PC-3 (cell line): ENCODE measurements at regions of chrX and their contacts with region 1.

Region 1: GRCh38 chrX:11533211-11533651 is 132.5 kb downstream of the ARHGAP6 start:
- DNase-seq: peak; percentile 84
- ATAC-seq: peak; percentile 86
- H3K4me3 ChIP-seq: no peak overlapping the region
- H3K27ac ChIP-seq: no peak overlapping the region
- H3K4me1 ChIP-seq: peaks cover 12% of the 10 kb centered on the region
- H3K27me3 ChIP-seq: no peaks in the 10 kb centered on the region
- CTCF ChIP-seq: peak; percentile 95

Region 2: GRCh38 chrX:11329021-11329420 is 204.2 kb before region 1 on chrX:
- CTCF ChIA-PET with region 1: no interaction called
- POLR2A ChIA-PET with region 1: no interaction called
- intact Hi-C with region 1: no loop called
- DNase-seq: peak; percentile 70
- ATAC-seq: peak; percentile 79
- H3K4me3 ChIP-seq: no peak overlapping the region
- H3K27ac ChIP-seq: peak overlapping the region; percentile 69
- H3K4me1 ChIP-seq: peaks cover 13% of the 10 kb centered on the region
- H3K27me3 ChIP-seq: no peaks in the 10 kb centered on the region
- CTCF ChIP-seq: no peak

Region 3: DNA sequence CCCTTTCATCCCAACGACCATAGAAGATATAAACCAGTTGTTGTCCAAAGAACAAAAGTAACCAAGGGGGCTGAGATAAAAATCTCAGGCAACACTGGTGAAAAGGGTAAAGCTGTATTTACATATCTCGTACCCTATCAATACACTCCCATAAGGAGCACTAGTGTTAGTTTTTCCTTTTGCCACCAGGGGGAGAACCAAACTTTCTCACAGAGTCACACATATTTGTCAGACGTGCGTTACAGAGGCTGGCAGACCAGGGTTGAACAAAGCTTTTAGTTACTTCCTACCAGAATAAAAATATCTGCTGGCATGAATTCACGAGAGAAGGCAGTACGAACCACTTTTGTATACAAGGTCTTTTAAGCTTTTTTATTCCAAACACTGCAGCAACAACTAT is 151.8 kb before region 1 on chrX:
- CTCF ChIA-PET with region 1: no interaction called
- POLR2A ChIA-PET with region 1: no interaction called
- intact Hi-C with region 1: loop called (anchors 1 kb)
- DNase-seq: peak; percentile 77
- ATAC-seq: peak; percentile 77
- H3K4me3 ChIP-seq: no peak overlapping the region
- H3K27ac ChIP-seq: no peak overlapping the region
- H3K4me1 ChIP-seq: peaks cover 39% of the 10 kb centered on the region
- H3K27me3 ChIP-seq: no peaks in the 10 kb centered on the region
- CTCF ChIP-seq: peak; percentile 71

Region 4: DNA sequence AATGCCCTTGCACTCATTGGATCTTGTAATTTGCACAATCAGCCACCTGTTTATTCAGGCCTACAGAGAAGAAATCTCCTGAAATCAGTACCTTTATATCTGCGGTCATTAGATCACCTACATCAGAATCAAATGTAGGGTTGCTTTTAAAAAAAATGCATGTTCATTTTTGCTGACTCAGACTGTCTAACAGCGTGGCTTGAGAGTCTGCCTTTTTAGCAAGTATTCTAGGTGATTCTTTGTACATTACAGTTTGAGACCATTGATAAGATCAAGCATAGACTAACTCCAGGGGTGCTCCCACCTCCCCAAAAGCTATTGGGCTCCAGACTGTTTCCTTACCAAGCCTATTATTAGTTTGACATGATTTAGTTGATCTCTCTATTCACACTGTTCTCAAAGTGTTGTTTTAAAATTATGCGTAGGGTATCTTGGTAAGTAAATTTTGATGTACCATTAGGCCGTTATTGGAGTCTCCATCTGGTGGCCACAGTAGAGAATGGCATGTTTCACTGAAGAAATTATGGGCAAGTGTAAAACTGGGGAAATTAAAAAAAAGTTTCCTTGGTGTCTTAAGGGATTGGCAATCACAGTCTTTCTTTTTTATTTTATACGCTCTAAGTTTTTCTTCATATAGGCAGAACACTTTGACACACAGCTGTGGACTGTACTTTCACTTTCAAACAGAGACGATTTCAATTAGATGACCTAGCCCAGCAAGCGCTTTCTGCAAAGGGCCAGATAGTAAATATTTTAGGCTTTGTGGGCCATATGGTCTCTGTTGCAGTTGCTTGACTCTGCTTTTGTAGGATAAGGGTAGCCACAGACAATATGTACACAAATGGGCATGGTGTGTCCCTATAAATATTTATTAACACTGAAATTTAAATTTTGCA is 191.1 kb after region 1 on chrX:
- CTCF ChIA-PET with region 1: no interaction called
- POLR2A ChIA-PET with region 1: no interaction called
- intact Hi-C with region 1: loop called (anchors 1 kb)
- DNase-seq: peak; percentile 44
- ATAC-seq: peak; percentile 42
- H3K4me3 ChIP-seq: no peak overlapping the region
- H3K27ac ChIP-seq: no peak overlapping the region
- H3K4me1 ChIP-seq: no peaks in the 10 kb centered on the region
- H3K27me3 ChIP-seq: no peaks in the 10 kb centered on the region
- CTCF ChIP-seq: peak; percentile 73

Region 5: DNA sequence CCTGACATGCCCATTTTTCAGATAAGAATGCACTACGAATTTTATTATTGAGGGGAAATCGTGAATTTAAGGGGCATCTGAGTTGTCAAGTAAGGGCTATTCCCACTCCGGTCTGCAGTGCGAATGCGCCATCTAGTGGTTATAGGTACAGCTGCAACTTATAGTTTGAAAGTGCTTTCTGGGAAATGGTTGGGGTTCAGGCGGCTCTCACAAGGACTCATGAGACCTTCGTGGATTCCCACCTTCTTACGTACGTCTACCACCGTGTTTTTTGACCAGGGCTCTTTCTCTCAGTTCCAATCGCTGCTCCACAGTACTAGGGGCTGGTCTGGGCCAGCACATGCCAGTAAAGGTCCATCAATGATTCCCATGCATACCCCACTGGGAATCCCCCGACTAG is 237.1 kb after region 1 on chrX:
- CTCF ChIA-PET with region 1: no interaction called
- POLR2A ChIA-PET with region 1: no interaction called
- intact Hi-C with region 1: loop called (anchors 1 kb)
- DNase-seq: peak; percentile 59
- ATAC-seq: peak; percentile 53
- H3K4me3 ChIP-seq: no peak overlapping the region
- H3K27ac ChIP-seq: no peak overlapping the region
- H3K4me1 ChIP-seq: no peaks in the 10 kb centered on the region
- H3K27me3 ChIP-seq: no peaks in the 10 kb centered on the region
- CTCF ChIP-seq: peak; percentile 86